CD4-positive, alpha-beta T cell (primary cell): ENCODE measurements at regions of chr14 and their contacts with region 1.

Region 1: GRCh38 chr14:99518441-99519346 is 37.5 kb downstream of the CCNK start:
- DNase-seq: peak; percentile 72 to 90 (median 80)
- ATAC-seq: peak; percentile 92
- H3K4me3 ChIP-seq: no peak overlapping the region
- H3K4me3 Mint-ChIP-seq: no peak overlapping the region
- H3K27ac ChIP-seq: no peak overlapping the region
- H3K27ac Mint-ChIP-seq: no peak overlapping the region
- H3K4me1 ChIP-seq: peaks cover 8% of the 10 kb centered on the region
- H3K4me1 Mint-ChIP-seq: no peaks in the 10 kb centered on the region
- H3K27me3 ChIP-seq: no peaks in the 10 kb centered on the region
- H3K27me3 Mint-ChIP-seq: no peaks in the 10 kb centered on the region
- CTCF ChIP-seq: peak; percentile 97

Region 2: DNA sequence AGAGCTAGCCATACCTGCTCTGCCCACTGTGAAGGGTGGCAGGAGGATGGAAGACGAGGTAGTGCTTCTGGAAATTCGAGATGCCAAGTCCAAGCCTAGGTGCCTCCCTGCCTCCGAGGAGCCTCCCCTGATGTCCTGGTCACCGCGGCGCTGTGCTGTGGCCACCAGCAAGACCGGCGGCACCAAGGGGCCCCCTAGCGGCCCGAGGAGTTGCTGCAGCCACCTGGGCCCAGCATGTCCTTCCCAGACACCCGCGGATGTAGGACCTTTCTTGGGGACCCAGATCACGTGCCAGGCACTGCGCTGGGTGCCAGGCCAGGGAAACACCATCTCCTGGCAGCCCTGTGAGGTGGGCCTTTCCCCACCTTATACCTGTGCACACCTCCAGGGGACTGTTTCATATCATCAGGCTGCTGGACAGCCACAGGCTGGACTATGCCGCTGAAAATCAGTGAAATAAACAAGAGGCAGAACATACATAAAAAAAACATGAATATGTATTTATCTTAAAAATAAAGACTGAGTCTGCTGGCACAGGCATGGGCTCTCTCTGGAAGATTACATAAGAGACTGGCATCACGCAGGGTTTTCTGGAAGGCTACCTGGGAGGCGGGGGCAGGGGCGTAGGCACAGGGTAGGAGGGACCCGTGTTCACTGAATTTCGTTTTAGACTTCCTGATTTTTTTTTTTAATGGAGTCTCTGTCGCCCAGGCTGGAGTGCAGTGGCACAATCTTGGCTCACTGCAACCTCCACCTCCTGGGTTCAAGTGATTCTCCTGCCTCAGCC is 110.3 kb after region 1 on chr14:
- CTCF ChIA-PET with region 1: interaction called, 4 read pairs
- POLR2A ChIA-PET with region 1: no interaction called
- intact Hi-C with region 1: loop called (anchors 1 kb)
- DNase-seq: peak; percentile 32 to 80 (median 50)
- ATAC-seq: peak; percentile 78
- H3K4me3 ChIP-seq: no peak overlapping the region
- H3K4me3 Mint-ChIP-seq: no peak overlapping the region
- H3K27ac ChIP-seq: no peak overlapping the region
- H3K27ac Mint-ChIP-seq: no peak overlapping the region
- H3K4me1 ChIP-seq: peaks cover 7% of the 10 kb centered on the region
- H3K4me1 Mint-ChIP-seq: peaks cover 3% of the 10 kb centered on the region
- H3K27me3 ChIP-seq: no peaks in the 10 kb centered on the region
- H3K27me3 Mint-ChIP-seq: peaks cover 25% of the 10 kb centered on the region
- CTCF ChIP-seq: peak; percentile 80

Region 3: GRCh38 chr14:99793213-99794150 is 274.8 kb after region 1 on chr14 and contains the start of gene EML1:
- CTCF ChIA-PET with region 1: no interaction called
- POLR2A ChIA-PET with region 1: no interaction called
- intact Hi-C with region 1: loop called in 1 of 2 experiments (anchors 5 kb)
- DNase-seq: peak; percentile 56 to 91 (median 71)
- ATAC-seq: peak; percentile 81
- H3K4me3 ChIP-seq: peak within 1 kb of the TSS; percentile 29
- H3K4me3 Mint-ChIP-seq: peak within 1 kb of the TSS; percentile 83
- H3K27ac ChIP-seq: no peak within 1 kb of the TSS
- H3K27ac Mint-ChIP-seq: no peak within 1 kb of the TSS
- H3K4me1 ChIP-seq: peaks cover 8% of the 10 kb centered on the region
- H3K4me1 Mint-ChIP-seq: peaks cover 29% of the 10 kb centered on the region
- H3K27me3 ChIP-seq: peaks cover 12 to 19% of the 10 kb centered on the region in 2 experiments
- H3K27me3 Mint-ChIP-seq: peaks cover 38% of the 10 kb centered on the region
- CTCF ChIP-seq: no peak
- total RNA-seq, gene EML1: 0.59 TPM in 1 of 2 experiments, not detected in the other

Region 4: DNA sequence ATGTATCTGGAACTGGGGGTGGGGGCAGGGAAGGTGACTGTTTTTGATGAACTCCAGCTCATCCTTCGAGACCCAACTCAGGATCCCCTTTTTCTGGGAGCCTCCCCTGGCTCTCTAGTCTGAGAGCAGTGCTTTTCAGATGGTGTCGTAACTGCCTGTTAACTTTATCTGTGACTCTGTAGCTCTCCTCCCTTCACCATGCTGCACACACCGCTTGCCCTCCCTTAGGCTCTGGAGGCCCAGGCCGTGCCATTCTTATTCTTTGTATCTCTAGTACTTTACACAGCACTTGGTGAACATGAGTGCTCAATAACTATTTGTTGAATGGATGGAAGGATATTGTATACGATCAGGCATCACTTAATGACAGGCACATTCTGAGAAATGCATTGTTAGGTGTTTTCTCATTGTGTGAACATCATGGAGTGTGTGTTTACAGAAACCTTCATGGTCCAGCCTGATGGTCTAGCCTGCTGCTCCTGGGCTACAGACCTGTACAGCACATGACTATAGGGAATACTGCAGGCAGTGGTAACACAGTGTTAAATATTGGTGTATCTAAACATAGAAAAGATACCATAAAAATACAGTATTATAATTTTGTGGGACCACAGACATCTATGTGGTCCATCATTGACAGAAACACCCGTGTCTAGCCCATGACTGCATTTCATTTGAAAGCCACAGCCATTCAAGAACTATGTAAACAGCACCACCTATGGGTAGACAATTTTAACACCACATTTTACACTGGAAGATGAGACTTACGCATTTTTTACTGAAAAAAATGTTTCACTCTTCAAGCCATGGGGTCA is 366.3 kb after region 1 on chr14:
- CTCF ChIA-PET with region 1: no interaction called
- POLR2A ChIA-PET with region 1: no interaction called
- intact Hi-C with region 1: loop called (anchors 1 kb)
- DNase-seq: peak in 5 of 14 experiments; percentile 7 to 74 (median 66)
- ATAC-seq: peak; percentile 80
- H3K4me3 ChIP-seq: no peak overlapping the region
- H3K4me3 Mint-ChIP-seq: no peak overlapping the region
- H3K27ac ChIP-seq: no peak overlapping the region
- H3K27ac Mint-ChIP-seq: no peak overlapping the region
- H3K4me1 ChIP-seq: no peaks in the 10 kb centered on the region
- H3K4me1 Mint-ChIP-seq: no peaks in the 10 kb centered on the region
- H3K27me3 ChIP-seq: peaks cover 2 to 12% of the 10 kb centered on the region in 2 experiments
- H3K27me3 Mint-ChIP-seq: peaks cover 16% of the 10 kb centered on the region
- CTCF ChIP-seq: peak; percentile 85

Region 5: GRCh38 chr14:99946652-99947489 is 428.2 kb after region 1 on chr14:
- CTCF ChIA-PET with region 1: no interaction called
- POLR2A ChIA-PET with region 1: no interaction called
- intact Hi-C with region 1: loop called in 1 of 2 experiments (anchors 5 kb)
- DNase-seq: peak; percentile 25 to 71 (median 44)
- ATAC-seq: peak; percentile 65
- H3K4me3 ChIP-seq: peak overlapping the region; percentile 37
- H3K4me3 Mint-ChIP-seq: peak overlapping the region; percentile 70
- H3K27ac ChIP-seq: no peak overlapping the region
- H3K27ac Mint-ChIP-seq: no peak overlapping the region
- H3K4me1 ChIP-seq: peaks cover 15% of the 10 kb centered on the region
- H3K4me1 Mint-ChIP-seq: peaks cover 11% of the 10 kb centered on the region
- H3K27me3 ChIP-seq: peaks cover 8 to 15% of the 10 kb centered on the region in 2 experiments
- H3K27me3 Mint-ChIP-seq: peaks cover 32% of the 10 kb centered on the region
- CTCF ChIP-seq: peak; percentile 98